Activated naive CD4-positive, alpha-beta T cell treated with anti-CD3 and anti-CD28 coated beads for 36 hours (primary cell): ENCODE measurements at regions of chr12 and their contacts with region 1.

Region 1: GRCh38 chr12:132489602-132490239 is at the start of gene FBRSL1:
- DNase-seq: peak; percentile 93
- H3K4me3 Mint-ChIP-seq: peak within 1 kb of the TSS; percentile 79
- H3K27ac Mint-ChIP-seq: peak within 1 kb of the TSS; percentile 73
- H3K4me1 Mint-ChIP-seq: peaks cover 57% of the 10 kb centered on the region
- H3K27me3 Mint-ChIP-seq: no peaks in the 10 kb centered on the region
- total RNA-seq, gene FBRSL1: 35.1 to 36.3 TPM

Region 2: GRCh38 chr12:131353821-131354220 is 1135.9 kb before region 1 on chr12:
- CTCF ChIA-PET with region 1: no interaction called
- intact Hi-C with region 1: no loop called
- DNase-seq: no peak
- H3K4me3 Mint-ChIP-seq: no peak overlapping the region
- H3K27ac Mint-ChIP-seq: no peak overlapping the region
- H3K4me1 Mint-ChIP-seq: no peaks in the 10 kb centered on the region
- H3K27me3 Mint-ChIP-seq: peaks cover 5% of the 10 kb centered on the region

Region 3: DNA sequence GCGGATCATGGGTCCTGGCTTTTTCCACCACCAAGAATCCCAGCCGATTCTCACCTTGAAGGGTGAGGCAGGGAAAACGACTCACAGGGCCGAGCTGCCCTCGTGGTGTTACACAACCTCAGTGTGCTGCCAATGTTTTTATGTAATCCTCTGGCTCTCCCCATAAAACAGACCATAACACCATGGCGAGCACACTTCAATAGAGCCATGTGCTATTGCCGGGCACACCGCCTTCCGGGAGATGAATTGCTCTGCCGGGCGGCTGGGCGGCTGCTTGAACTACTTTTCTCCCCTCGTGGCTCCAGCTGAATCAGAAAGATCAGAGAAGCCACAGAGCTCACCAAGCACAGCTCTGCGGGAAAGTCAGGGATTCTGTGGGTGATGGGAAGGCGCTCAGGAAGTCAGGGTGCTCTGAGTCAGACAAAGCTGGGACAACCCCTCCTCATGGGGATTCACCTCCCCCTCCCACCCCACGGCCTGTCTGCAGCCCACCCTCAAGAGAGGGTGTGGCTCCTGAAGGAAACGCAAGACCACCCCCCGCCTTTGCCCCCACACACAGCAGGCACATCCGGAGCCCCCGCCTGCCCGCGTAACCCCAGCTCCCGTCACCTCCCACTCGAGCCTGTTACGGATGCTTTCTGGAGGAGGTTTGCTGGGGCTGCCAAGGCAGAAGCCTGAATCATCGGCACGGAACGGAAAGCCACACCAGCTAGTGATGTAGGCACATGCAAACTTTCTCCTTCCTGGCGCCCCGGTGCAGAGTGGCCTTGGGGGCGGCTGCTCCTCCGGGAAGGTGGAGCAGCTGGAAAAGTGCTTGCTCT is 162.2 kb before region 1 on chr12:
- CTCF ChIA-PET with region 1: no interaction called
- intact Hi-C with region 1: loop called (anchors 5 kb)
- DNase-seq: peak; percentile 89
- H3K4me3 Mint-ChIP-seq: peak overlapping the region; percentile 50
- H3K27ac Mint-ChIP-seq: peak overlapping the region; percentile 88
- H3K4me1 Mint-ChIP-seq: peaks cover 35% of the 10 kb centered on the region
- H3K27me3 Mint-ChIP-seq: peaks cover 32% of the 10 kb centered on the region

Region 4: DNA sequence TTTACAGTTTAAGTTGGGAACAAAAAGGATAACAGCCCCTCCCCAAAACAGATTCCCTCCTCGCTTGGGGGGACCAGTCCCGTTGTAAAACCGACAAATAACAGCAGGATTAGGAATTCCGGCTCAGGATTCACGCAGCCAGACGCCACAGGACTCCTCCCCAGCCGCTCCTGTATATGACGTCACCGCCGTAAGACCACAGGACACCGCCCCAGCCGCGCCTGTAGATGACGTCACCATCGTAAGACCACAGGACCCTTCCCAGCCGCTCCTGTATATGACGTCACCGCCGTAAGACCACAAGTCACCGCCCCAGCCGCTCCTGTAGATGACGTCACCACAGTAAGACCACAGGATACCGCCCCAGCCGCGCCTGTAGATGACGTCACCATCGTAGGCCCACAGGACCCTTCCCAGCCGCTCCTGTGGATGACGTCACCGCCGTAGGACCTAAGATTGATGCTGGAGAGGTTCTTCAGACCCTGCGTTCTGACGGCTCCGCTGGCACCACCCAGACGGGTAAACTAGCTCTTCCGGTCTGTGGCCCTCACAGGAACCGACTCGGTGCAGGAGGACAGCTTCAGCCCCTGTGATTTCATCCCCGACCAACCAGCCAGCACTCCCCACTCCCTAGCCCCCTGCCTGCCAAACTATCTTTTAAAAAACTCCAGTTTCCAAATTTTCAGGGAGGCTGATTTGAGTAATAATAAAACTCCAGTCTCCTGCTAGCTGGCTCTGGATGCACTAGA is 43.7 kb before region 1 on chr12:
- CTCF ChIA-PET with region 1: interaction called, 3 read pairs
- intact Hi-C with region 1: loop called (anchors 1 kb)
- DNase-seq: peak; percentile 61
- H3K4me3 Mint-ChIP-seq: peak overlapping the region; percentile 92
- H3K27ac Mint-ChIP-seq: peak overlapping the region; percentile 99
- H3K4me1 Mint-ChIP-seq: peaks cover 56% of the 10 kb centered on the region
- H3K27me3 Mint-ChIP-seq: no peaks in the 10 kb centered on the region

Region 5: GRCh38 chr12:132460571-132460970 is 29.1 kb before region 1 on chr12:
- CTCF ChIA-PET with region 1: no interaction called
- intact Hi-C with region 1: no loop called
- DNase-seq: peak; percentile 38
- H3K4me3 Mint-ChIP-seq: no peak overlapping the region
- H3K27ac Mint-ChIP-seq: no peak overlapping the region
- H3K4me1 Mint-ChIP-seq: peaks cover 6% of the 10 kb centered on the region
- H3K27me3 Mint-ChIP-seq: no peaks in the 10 kb centered on the region

Region 6: GRCh38 chr12:132475304-132476037 is 14.2 kb before region 1 on chr12:
- CTCF ChIA-PET with region 1: no interaction called
- intact Hi-C with region 1: loop called (anchors 1 kb)
- DNase-seq: peak; percentile 44
- H3K4me3 Mint-ChIP-seq: peak overlapping the region; percentile 46
- H3K27ac Mint-ChIP-seq: no peak overlapping the region
- H3K4me1 Mint-ChIP-seq: peaks cover 32% of the 10 kb centered on the region
- H3K27me3 Mint-ChIP-seq: no peaks in the 10 kb centered on the region

Region 7: GRCh38 chr12:132506328-132507160 is 16.8 kb after region 1 on chr12:
- CTCF ChIA-PET with region 1: interaction called, 3 read pairs
- intact Hi-C with region 1: loop called (anchors 1 kb)
- DNase-seq: peak; percentile 85
- H3K4me3 Mint-ChIP-seq: peak overlapping the region; percentile 54
- H3K27ac Mint-ChIP-seq: peak overlapping the region; percentile 56
- H3K4me1 Mint-ChIP-seq: peaks cover 50% of the 10 kb centered on the region
- H3K27me3 Mint-ChIP-seq: no peaks in the 10 kb centered on the region